ENCODE measurements at regions of chr21 and their contacts with region 1.

Region 1: GRCh38 chr21:36429947-36430546 is 44.9 kb downstream of the CHAF1B start:
- DNase-seq: peak; percentile 79 to 91 (median 81)
- H3K4me3 ChIP-seq: peak overlapping the region; percentile 27
- H3K27ac ChIP-seq: peak overlapping the region in 1 of 2 donors; percentile 69
- H3K4me1 ChIP-seq: peaks cover 7% of the 10 kb centered on the region
- H3K27me3 ChIP-seq: no peaks in the 10 kb centered on the region
- CTCF ChIP-seq: peak in 2 of 3 donors; percentile 44 to 47
- EP300 ChIP-seq: peak; percentile 49
- POLR2A ChIP-seq: peak; percentile 18

Region 2: DNA sequence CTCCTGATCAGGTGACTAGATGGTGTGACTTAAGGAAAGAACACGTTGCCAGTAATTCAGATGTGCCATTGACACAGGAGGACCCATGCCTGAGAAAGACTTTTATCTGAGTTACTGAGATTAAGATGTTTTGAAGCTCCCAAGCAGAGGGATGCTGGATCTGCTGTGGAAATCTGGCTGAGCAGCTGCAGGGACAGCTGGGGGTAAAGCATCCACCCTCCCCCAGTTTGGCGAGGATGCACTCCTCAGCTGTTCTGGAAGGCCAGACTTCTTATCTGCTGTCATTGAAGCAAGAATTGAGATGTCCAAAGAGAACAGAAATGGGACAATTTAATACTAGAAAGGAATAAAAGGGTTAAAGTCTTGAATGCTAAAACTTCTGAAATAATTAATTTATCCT is 668.7 kb after region 1 on chr21:
- intact Hi-C with region 1: loop called in 1 of 4 experiments (anchors 5 kb)
- DNase-seq: no peak
- H3K4me3 ChIP-seq: no peak overlapping the region
- H3K27ac ChIP-seq: no peak overlapping the region
- H3K4me1 ChIP-seq: no peaks in the 10 kb centered on the region
- H3K27me3 ChIP-seq: no peaks in the 10 kb centered on the region
- CTCF ChIP-seq: no peak
- EP300 ChIP-seq: no peak
- POLR2A ChIP-seq: no peak

Measured in ovary (tissue), 10 donors.